ENCODE measurements at regions of chr14 and their contacts with region 1.

Region 1: GRCh38 chr14:74804219-74804826 is 41.2 kb downstream of the YLPM1 start:
- DNase-seq: peak in 7 of 14 experiments; percentile 7 to 48 (median 17)
- ATAC-seq: peak; percentile 69
- H3K4me3 ChIP-seq: no peak overlapping the region
- H3K4me3 Mint-ChIP-seq: no peak overlapping the region
- H3K27ac ChIP-seq: no peak overlapping the region
- H3K27ac Mint-ChIP-seq: no peak overlapping the region
- H3K4me1 ChIP-seq: no peaks in the 10 kb centered on the region
- H3K4me1 Mint-ChIP-seq: peaks cover 17% of the 10 kb centered on the region
- H3K27me3 ChIP-seq: no peaks in the 10 kb centered on the region
- H3K27me3 Mint-ChIP-seq: no peaks in the 10 kb centered on the region
- CTCF ChIP-seq: peak; percentile 56

Region 2: GRCh38 chr14:74612350-74613021 is 191.8 kb before region 1 on chr14:
- CTCF ChIA-PET with region 1: interaction called, 5 read pairs
- POLR2A ChIA-PET with region 1: interaction called, 4 read pairs
- intact Hi-C with region 1: loop called (anchors 1 kb)
- DNase-seq: peak; percentile 65 to 95 (median 81)
- ATAC-seq: peak; percentile 79
- H3K4me3 ChIP-seq: peak overlapping the region; percentile 65
- H3K4me3 Mint-ChIP-seq: peak overlapping the region; percentile 79
- H3K27ac ChIP-seq: no peak overlapping the region
- H3K27ac Mint-ChIP-seq: no peak overlapping the region
- H3K4me1 ChIP-seq: peaks cover 54% of the 10 kb centered on the region
- H3K4me1 Mint-ChIP-seq: peaks cover 29% of the 10 kb centered on the region
- H3K27me3 ChIP-seq: no peaks in the 10 kb centered on the region
- H3K27me3 Mint-ChIP-seq: peaks cover 9% of the 10 kb centered on the region
- CTCF ChIP-seq: peak; percentile 52

Region 3: GRCh38 chr14:74737753-74738325 is 66.5 kb before region 1 on chr14:
- CTCF ChIA-PET with region 1: no interaction called
- POLR2A ChIA-PET with region 1: no interaction called
- intact Hi-C with region 1: no loop called
- DNase-seq: no peak
- ATAC-seq: no peak
- H3K4me3 ChIP-seq: no peak overlapping the region
- H3K4me3 Mint-ChIP-seq: no peak overlapping the region
- H3K27ac ChIP-seq: no peak overlapping the region
- H3K27ac Mint-ChIP-seq: no peak overlapping the region
- H3K4me1 ChIP-seq: no peaks in the 10 kb centered on the region
- H3K4me1 Mint-ChIP-seq: no peaks in the 10 kb centered on the region
- H3K27me3 ChIP-seq: no peaks in the 10 kb centered on the region
- H3K27me3 Mint-ChIP-seq: no peaks in the 10 kb centered on the region
- CTCF ChIP-seq: no peak

Region 4: DNA sequence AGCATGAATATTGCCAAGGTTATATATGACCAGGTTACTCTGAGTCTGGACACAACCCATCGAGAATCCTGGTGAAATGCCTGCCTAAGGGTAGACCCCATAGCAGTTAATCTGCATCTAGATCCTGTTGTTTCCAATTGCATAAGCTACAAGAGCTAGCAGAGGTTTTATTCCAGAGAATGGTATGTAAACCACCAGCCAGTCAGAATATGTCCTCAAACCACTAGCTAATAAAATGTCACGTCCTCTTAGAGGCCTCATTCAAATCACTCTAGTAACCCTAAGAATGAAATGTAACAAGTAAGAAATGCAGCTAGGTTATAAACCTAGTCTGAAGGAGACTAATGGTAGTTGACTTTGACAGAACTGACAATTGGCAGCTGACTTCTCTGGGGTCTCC is 50.2 kb before region 1 on chr14:
- CTCF ChIA-PET with region 1: no interaction called
- POLR2A ChIA-PET with region 1: no interaction called
- intact Hi-C with region 1: no loop called
- DNase-seq: no peak
- ATAC-seq: no peak
- H3K4me3 ChIP-seq: no peak overlapping the region
- H3K4me3 Mint-ChIP-seq: no peak overlapping the region
- H3K27ac ChIP-seq: no peak overlapping the region
- H3K27ac Mint-ChIP-seq: no peak overlapping the region
- H3K4me1 ChIP-seq: no peaks in the 10 kb centered on the region
- H3K4me1 Mint-ChIP-seq: no peaks in the 10 kb centered on the region
- H3K27me3 ChIP-seq: no peaks in the 10 kb centered on the region
- H3K27me3 Mint-ChIP-seq: no peaks in the 10 kb centered on the region
- CTCF ChIP-seq: no peak

Measured in CD4-positive, alpha-beta T cell (primary cell).